ENCODE measurements at regions of chr13 and their contacts with region 1.

Region 1: GRCh38 chr13:77329133-77329910 is 2.4 kb upstream of the MYCBP2 start:
- DNase-seq: peak; percentile 92
- ATAC-seq: peak; percentile 65
- H3K4me3 ChIP-seq: peak overlapping the region; percentile 97
- H3K27ac ChIP-seq: peak overlapping the region; percentile 92
- H3K4me1 ChIP-seq: peaks cover 19% of the 10 kb centered on the region
- H3K27me3 ChIP-seq: no peaks in the 10 kb centered on the region
- CTCF ChIP-seq: no peak

Region 2: GRCh38 chr13:77026818-77027585 is 302.3 kb before region 1 on chr13 and contains the start of gene FBXL3:
- CTCF ChIA-PET with region 1: no interaction called
- POLR2A ChIA-PET with region 1: interaction called, 11 read pairs
- intact Hi-C with region 1: no loop called
- DNase-seq: peak; percentile 74
- ATAC-seq: peak; percentile 61
- H3K4me3 ChIP-seq: peak within 1 kb of the TSS; percentile 96
- H3K27ac ChIP-seq: peak within 1 kb of the TSS; percentile 75
- H3K4me1 ChIP-seq: peaks cover 41% of the 10 kb centered on the region
- H3K27me3 ChIP-seq: no peaks in the 10 kb centered on the region
- CTCF ChIP-seq: no peak
- total RNA-seq, gene FBXL3: 39.1 and 41.1 TPM in 2 replicates

Region 3: DNA sequence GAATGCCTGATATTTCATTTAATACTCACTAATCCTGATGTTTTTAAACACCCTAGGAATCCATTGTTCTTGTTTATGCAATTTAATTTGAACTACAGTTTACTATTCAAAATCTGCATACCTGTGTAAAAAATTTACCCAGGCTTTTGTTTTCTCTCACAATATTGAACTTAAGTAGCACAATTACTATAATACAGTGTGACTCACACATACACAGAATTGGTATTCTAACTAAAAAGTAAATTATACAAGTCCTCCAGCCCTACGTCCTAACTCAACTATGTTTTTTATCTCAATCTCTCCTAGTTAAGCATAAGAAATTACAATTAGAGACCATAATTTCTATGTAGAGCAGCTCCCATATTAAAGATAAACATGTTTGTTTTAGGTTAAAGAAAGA is 44.2 kb before region 1 on chr13:
- CTCF ChIA-PET with region 1: no interaction called
- POLR2A ChIA-PET with region 1: no interaction called
- intact Hi-C with region 1: loop called (anchors 5 kb)
- DNase-seq: no peak
- ATAC-seq: no peak
- H3K4me3 ChIP-seq: no peak overlapping the region
- H3K27ac ChIP-seq: no peak overlapping the region
- H3K4me1 ChIP-seq: peaks cover 9% of the 10 kb centered on the region
- H3K27me3 ChIP-seq: no peaks in the 10 kb centered on the region
- CTCF ChIP-seq: no peak

Region 4: DNA sequence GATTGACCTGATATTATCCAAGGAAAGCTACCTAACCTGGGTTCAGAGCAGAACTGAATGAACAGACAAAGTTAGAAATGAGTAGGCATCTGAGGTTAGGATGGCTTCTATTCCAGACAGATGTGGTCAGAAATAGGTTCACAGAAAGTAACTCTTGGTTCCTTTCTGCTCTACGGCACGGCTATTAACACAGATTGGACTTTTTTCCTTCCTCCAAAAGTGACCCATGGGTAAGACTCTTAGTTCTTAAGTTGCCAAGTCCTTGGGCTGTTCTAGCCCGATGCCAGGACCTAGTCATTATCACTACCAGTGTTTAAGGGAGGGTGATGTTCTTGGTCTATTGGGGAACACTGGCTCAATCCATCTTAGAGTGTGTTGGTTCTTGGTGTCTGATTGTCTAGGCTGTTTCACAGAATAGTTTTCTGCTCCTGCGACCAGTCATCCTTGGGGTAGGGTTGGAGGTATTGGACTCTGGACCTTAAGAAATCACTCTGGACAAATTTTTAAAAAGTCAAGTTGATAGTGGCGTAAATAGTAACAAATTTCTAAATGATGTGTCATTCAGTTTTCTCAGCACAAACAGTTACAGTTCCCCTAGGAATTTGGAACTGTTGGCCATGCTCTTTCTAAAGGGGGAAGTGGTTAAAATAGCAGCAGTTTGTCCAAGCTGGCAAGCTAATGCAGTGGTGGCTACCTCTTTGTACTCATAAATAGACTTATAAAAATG is 57.7 kb after region 1 on chr13:
- CTCF ChIA-PET with region 1: no interaction called
- POLR2A ChIA-PET with region 1: no interaction called
- intact Hi-C with region 1: loop called (anchors 1 kb)
- DNase-seq: peak; percentile 76
- ATAC-seq: peak; percentile 96
- H3K4me3 ChIP-seq: no peak overlapping the region
- H3K27ac ChIP-seq: peak overlapping the region; percentile 28; the same call in 1 of the 2 replicates
- H3K4me1 ChIP-seq: peaks cover 14% of the 10 kb centered on the region; the same call in 1 of the 2 replicates
- H3K27me3 ChIP-seq: no peaks in the 10 kb centered on the region
- CTCF ChIP-seq: no peak

Region 5: GRCh38 chr13:77429320-77430142 is 100.2 kb after region 1 on chr13:
- CTCF ChIA-PET with region 1: interaction called, 4 read pairs
- POLR2A ChIA-PET with region 1: no interaction called
- intact Hi-C with region 1: loop called (anchors 5 kb)
- DNase-seq: peak; percentile 81
- ATAC-seq: peak; percentile 99
- H3K4me3 ChIP-seq: no peak overlapping the region
- H3K27ac ChIP-seq: peak overlapping the region; percentile 65
- H3K4me1 ChIP-seq: peaks cover 7% of the 10 kb centered on the region
- H3K27me3 ChIP-seq: no peaks in the 10 kb centered on the region
- CTCF ChIP-seq: no peak

Region 6: GRCh38 chr13:77480066-77480465 is 150.7 kb after region 1 on chr13:
- CTCF ChIA-PET with region 1: interaction called, 6 read pairs
- POLR2A ChIA-PET with region 1: interaction called, 4 read pairs
- intact Hi-C with region 1: loop called (anchors 1 kb)
- DNase-seq: no peak
- ATAC-seq: no peak
- H3K4me3 ChIP-seq: no peak overlapping the region
- H3K27ac ChIP-seq: no peak overlapping the region
- H3K4me1 ChIP-seq: peaks cover 13% of the 10 kb centered on the region
- H3K27me3 ChIP-seq: no peaks in the 10 kb centered on the region
- CTCF ChIP-seq: no peak

Region 7: DNA sequence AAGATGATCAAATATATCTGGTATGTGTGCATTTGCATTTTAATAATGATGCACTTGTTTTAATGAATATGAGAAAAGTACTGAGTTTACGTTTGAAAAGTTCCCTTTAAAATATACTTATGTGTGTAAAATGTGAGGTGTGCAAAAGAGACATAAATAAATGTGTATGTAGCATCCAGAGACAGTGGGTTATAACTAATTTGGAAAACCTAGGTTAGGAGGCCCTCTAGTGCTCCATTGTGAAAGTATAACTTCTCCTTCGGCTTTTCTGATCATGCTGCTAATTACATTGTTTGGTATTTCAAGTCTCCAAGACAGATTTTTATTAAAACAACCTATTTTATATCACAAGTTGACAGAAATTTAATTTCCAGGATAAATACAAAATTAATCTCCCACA is 236.3 kb after region 1 on chr13:
- CTCF ChIA-PET with region 1: no interaction called
- POLR2A ChIA-PET with region 1: no interaction called
- intact Hi-C with region 1: loop called (anchors 5 kb)
- DNase-seq: peak; percentile 66
- ATAC-seq: peak; percentile 67
- H3K4me3 ChIP-seq: no peak overlapping the region
- H3K27ac ChIP-seq: no peak overlapping the region
- H3K4me1 ChIP-seq: 0 out of 2 replicates have a peak, but pooled peaks cover 3% of the 10 kb centered on the region
- H3K27me3 ChIP-seq: no peaks in the 10 kb centered on the region
- CTCF ChIP-seq: peak; percentile 73